ENCODE measurements at regions of chr19 and their contacts with region 1.

Region 1: GRCh38 chr19:51158474-51159129 is 16.5 kb downstream of the SIGLEC7 start:
- DNase-seq: peak; percentile 67
- H3K4me3 Mint-ChIP-seq: no peak overlapping the region
- H3K27ac Mint-ChIP-seq: no peak overlapping the region
- H3K4me1 Mint-ChIP-seq: peaks cover 32% of the 10 kb centered on the region
- H3K27me3 Mint-ChIP-seq: peaks cover 14% of the 10 kb centered on the region

Region 2: DNA sequence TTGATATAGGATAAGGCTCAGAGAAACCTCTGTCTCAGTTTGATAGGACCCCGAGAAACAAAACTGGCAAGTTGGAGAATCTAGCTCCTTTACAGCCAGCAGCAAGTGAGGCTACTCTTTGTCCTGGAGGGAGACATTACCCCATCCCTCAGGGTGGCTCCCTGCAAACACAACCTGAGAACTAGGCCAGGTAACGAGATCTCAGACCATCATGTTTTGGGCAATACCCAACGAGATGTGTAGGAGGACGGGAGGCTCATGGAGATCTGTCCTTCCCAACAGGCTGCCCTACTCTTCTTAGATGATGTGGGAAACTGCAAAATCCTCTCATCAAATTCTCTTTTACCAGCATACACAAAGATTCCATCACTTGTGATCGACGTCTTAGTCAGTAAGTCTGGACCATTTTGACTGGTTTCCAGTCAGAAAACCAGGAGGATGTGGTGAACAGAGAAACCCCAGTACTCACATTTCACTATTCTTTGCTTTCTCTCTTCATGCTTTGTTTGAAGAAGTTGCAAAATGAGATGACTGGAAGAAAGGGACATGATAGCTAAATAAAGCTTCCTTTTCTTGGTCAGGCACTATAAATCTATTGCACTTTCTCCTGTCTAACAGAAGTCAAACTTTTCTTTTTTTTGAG is 44.4 kb before region 1 on chr19:
- intact Hi-C with region 1: loop called (anchors 2 kb)
- DNase-seq: no peak
- H3K4me3 Mint-ChIP-seq: no peak overlapping the region
- H3K27ac Mint-ChIP-seq: peak overlapping the region; percentile 70
- H3K4me1 Mint-ChIP-seq: peaks cover 23% of the 10 kb centered on the region
- H3K27me3 Mint-ChIP-seq: peaks cover 6% of the 10 kb centered on the region

Region 3: GRCh38 chr19:51327066-51328001 is 168.7 kb after region 1 on chr19:
- intact Hi-C with region 1: loop called (anchors 1 kb)
- DNase-seq: peak; percentile 66
- H3K4me3 Mint-ChIP-seq: peak overlapping the region; percentile 75
- H3K27ac Mint-ChIP-seq: peak overlapping the region; percentile 54
- H3K4me1 Mint-ChIP-seq: peaks cover 23% of the 10 kb centered on the region
- H3K27me3 Mint-ChIP-seq: peaks cover 37% of the 10 kb centered on the region

Region 4: DNA sequence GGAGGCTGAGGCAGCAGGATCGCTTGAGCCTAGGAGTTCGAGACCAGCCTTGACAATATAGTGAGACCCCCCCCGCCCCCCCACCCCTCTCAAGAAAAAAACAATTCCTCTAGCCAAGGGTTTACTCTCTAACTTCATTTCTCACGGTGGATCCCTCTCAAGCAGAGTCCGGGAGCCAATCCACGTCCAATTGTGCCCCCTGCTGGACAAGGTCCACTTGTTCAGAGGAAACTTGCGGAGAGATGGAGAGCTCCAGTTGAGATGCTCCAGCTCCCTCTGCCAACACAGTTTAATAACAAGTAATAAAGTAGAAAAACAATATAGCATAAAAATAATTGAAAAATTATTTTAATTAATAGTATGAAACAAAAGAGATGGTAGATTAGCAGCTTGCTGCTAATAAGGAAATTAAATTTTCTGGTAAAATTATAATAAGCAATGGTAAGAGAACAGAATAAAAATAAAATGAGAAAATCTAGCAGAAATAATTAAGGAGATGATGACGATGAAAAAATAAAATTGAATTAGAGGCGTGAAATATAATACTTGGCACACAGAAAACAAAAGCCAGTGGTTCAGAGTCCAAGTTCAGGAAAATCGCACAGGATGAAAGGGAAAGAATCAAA is 502.5 kb after region 1 on chr19:
- intact Hi-C with region 1: loop called (anchors 2 kb)
- DNase-seq: peak; percentile 26
- H3K4me3 Mint-ChIP-seq: no peak overlapping the region
- H3K27ac Mint-ChIP-seq: no peak overlapping the region
- H3K4me1 Mint-ChIP-seq: peaks cover 5% of the 10 kb centered on the region
- H3K27me3 Mint-ChIP-seq: peaks cover 21% of the 10 kb centered on the region